ENCODE measurements at regions of chr1 and their contacts with region 1.

Region 1: DNA sequence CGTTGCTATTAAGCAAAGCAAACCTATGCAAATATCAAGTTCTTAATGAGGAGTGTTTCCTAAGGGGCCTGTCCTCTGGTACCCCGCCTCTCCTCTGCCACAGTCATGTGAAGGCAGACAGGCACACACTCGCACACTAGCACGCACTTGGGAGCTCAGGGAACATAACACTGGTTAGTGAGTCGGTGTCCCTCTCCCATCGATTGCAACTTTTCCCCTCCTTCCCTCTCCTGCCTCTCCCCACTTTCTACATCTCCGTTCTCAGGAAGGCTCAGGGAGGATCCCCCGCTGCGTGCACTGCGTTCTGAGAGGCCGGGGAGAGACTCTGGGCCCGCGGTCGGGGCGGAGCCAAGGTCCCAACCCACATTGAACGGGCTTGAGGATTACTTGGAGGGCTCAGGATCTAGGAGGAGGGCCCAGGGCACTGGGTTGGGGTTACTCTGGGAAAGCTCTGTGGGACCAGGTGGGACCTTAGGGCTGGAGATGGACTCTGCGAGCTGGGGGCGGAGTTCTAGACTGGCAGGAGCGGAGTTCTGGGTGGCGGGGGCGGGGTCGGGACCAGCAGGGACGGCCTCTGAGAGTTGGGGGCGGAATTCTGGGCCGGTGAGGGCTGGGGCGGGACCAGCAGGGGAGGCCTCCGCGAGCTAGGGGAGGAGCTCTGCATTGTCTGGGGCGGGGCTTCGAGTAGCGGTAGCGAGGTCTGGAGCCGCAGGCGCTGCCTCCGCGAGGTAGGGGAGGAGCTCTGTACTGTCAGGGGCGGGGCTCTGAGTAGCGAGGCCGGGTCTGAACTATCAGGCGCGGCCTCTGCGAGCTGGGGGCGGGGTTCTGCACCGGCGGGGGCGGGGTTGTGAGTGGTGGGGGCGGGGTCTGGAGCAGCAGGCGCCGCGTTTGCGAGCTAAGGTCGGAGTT is 533 bp upstream of the LEPR start:
- DNase-seq: peak; percentile 100
- H3K4me3 Mint-ChIP-seq: no peak overlapping the region
- H3K27ac Mint-ChIP-seq: peak overlapping the region; percentile 93
- H3K4me1 Mint-ChIP-seq: peaks cover 28% of the 10 kb centered on the region
- H3K27me3 Mint-ChIP-seq: peaks cover 7% of the 10 kb centered on the region

Region 2: GRCh38 chr1:64966158-64966971 is 453.6 kb before region 1 on chr1 and contains the start of gene JAK1:
- intact Hi-C with region 1: loop called (anchors 1 kb)
- DNase-seq: peak; percentile 96
- H3K4me3 Mint-ChIP-seq: peak within 1 kb of the TSS; percentile 85
- H3K27ac Mint-ChIP-seq: peak within 1 kb of the TSS; percentile 89
- H3K4me1 Mint-ChIP-seq: peaks cover 51% of the 10 kb centered on the region
- H3K27me3 Mint-ChIP-seq: peaks cover 2% of the 10 kb centered on the region
- total RNA-seq, gene JAK1: 86.5 and 86.6 TPM in 2 replicates

Region 3: DNA sequence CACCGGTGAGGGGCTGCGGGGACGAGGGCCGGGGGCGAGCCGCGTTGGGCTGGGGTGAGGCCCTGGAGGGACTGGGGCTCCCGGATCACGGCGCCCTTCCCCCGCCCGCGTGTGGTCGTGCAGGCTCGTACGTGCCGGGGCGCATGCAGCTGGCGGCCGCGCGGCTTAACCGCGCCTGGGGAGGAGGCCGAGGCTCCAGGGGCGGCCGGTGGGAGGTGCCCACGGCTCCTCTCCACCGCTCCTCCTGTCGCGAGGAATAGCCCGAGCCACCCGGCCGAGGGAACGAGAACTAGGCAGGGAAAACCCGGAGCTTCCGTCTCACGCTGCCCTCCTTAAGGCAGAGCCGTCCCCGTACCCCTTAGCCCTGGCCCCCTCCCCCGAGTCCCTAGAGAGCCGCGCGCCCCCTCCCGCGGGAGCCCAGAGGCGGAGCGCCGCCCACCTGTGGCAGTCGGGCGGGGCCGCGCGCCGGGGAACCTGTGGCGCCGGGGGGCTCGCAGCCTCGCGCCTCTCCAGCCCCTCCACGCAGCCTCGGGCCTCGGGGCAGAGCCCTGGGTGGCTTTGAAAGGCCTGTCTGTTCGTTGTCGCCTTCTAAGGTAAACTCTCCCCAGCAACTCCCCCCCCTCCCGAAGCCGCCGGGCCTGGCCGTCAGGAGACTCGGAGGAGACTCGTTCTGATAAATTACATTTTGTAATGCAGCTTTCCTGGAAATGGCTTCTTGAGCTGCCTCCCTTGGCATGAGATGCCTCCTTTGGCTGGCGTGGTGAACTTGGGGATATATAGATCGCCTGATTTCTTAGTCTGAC is 271.2 kb before region 1 on chr1:
- intact Hi-C with region 1: loop called (anchors 2 kb)
- DNase-seq: peak; percentile 90
- H3K4me3 Mint-ChIP-seq: peak overlapping the region; percentile 93
- H3K27ac Mint-ChIP-seq: peak overlapping the region; percentile 96
- H3K4me1 Mint-ChIP-seq: peaks cover 41% of the 10 kb centered on the region
- H3K27me3 Mint-ChIP-seq: peaks cover 13% of the 10 kb centered on the region

Region 4: DNA sequence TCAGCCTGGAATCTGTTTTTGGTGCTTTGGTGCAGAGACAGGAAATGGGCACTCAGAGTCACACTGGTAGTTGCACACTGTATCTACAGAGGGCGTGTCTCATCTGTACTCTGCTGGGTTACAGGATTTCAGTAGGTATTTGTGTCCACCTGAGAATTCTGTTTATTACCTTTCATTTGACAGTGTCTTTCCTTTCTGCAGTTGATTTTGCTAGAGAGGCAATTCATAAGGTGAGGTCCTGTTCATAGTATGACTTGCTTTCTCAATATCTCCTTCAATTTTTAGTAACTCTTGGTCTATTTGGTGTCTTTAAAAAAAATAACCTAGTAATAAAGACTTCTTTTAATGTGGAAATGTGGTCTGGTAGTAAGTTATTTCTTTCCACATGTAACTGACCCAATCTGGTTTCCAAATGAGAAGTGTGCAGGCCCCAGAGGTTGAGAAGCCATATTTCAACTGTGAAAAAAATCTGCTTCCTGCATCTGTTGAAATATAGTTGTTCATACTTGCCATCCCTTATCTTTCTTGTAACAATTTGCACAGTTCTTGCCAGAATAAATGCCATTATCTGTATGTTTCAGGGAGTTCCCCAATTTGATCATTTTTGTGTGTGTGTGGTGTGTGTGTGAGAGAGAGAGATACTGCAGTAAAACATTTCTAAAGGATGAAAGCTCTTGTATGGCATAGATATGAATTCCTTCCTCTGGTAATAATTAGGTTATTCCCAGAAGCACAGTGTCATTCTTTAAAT is 189.0 kb before region 1 on chr1:
- intact Hi-C with region 1: loop called (anchors 1 kb)
- DNase-seq: no peak
- H3K4me3 Mint-ChIP-seq: peak overlapping the region; percentile 71
- H3K27ac Mint-ChIP-seq: peak overlapping the region; percentile 93
- H3K4me1 Mint-ChIP-seq: peaks cover 28% of the 10 kb centered on the region
- H3K27me3 Mint-ChIP-seq: no peaks in the 10 kb centered on the region

Region 5: GRCh38 chr1:65393347-65393746 is 26.6 kb before region 1 on chr1:
- intact Hi-C with region 1: loop called (anchors 1 kb)
- DNase-seq: peak; percentile 81
- H3K4me3 Mint-ChIP-seq: peak overlapping the region; percentile 38
- H3K27ac Mint-ChIP-seq: peak overlapping the region; percentile 54
- H3K4me1 Mint-ChIP-seq: peaks cover 72% of the 10 kb centered on the region
- H3K27me3 Mint-ChIP-seq: no peaks in the 10 kb centered on the region